PC-3 (cell line): ENCODE measurements at regions of chr12 and their contacts with region 1.

Region 1: DNA sequence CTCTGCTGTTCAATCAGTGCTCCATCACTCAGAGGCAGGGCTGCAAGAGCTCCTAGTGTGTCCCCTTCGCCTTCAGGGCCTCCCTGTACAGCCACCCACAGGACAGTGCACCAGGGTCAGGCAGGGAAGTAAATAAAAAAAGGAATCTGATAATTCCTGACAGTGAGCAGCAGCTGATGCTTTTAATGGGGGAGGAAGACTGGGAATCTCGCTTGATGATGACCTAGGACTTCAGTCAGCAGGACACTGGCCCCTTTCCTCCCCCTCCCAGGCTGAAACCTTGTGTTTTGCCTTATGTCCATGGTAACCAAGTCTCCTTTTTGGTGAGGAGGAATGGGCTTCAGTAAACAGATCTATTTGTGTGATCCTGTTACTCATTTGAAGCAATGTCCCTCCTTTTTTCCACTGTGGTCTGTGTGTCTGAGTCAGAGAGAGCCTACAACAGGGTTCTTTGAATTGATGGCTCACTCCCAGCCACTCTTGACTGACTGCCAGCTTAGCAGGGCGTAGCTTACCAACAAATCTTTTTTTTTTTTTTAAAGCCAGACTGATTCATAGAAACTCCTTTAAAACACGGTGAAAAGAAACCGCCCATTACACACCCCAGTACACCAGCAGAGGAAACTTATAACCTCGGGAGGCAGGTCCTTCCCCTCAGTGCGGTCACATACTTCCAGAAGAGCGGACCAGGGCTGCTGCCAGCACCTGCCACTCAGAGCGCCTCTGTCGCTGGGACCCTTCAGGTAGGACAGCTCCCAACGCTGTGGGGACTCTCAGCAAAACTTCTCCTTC is at the start of gene EMP1:
- DNase-seq: peak; percentile 98
- ATAC-seq: peak; percentile 72
- H3K4me3 ChIP-seq: peak within 1 kb of the TSS; percentile 100
- H3K27ac ChIP-seq: peak within 1 kb of the TSS; percentile 99
- H3K4me1 ChIP-seq: peaks cover 53% of the 10 kb centered on the region
- H3K27me3 ChIP-seq: no peaks in the 10 kb centered on the region
- CTCF ChIP-seq: no peak
- total RNA-seq, gene EMP1: 158 and 187 TPM in 2 replicates

Region 2: GRCh38 chr12:13044002-13044905 is 152.1 kb before region 1 on chr12 and contains the start of gene FAM234B:
- CTCF ChIA-PET with region 1: no interaction called
- POLR2A ChIA-PET with region 1: interaction called, 13 read pairs
- intact Hi-C with region 1: no loop called
- DNase-seq: peak; percentile 60
- ATAC-seq: peak; percentile 96
- H3K4me3 ChIP-seq: peak within 1 kb of the TSS; percentile 97
- H3K27ac ChIP-seq: no peak within 1 kb of the TSS
- H3K4me1 ChIP-seq: 0 out of 2 replicates have a peak, but pooled peaks cover 4% of the 10 kb centered on the region
- H3K27me3 ChIP-seq: no peaks in the 10 kb centered on the region
- CTCF ChIP-seq: peak; percentile 29; the same call in 1 of the 2 replicates
- total RNA-seq, gene FAM234B: 3.1 and 3.3 TPM in 2 replicates

Region 3: DNA sequence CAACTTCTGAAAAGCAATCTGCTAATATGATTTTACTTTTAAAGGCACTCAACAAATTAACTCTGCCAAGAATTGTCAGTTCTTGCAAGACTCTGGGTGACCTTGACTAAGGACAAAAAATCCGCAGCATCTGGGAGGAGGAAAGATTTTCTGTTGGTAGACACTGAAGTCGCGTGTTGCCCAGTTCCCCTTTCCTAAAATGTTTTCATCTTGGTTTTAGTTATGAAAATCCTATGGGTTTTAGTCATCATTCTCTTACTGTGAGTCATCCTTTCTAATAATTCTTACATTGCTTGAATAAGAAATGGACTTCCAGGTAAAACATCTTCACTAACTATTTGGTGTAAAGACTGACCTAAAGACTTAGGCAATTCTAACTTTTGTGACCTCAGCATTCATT is 102.0 kb before region 1 on chr12:
- CTCF ChIA-PET with region 1: interaction called, 4 read pairs
- POLR2A ChIA-PET with region 1: interaction called, 17 read pairs
- intact Hi-C with region 1: loop called (anchors 1 kb)
- DNase-seq: peak; percentile 71
- ATAC-seq: 0 out of 2 replicates have a peak, but pooled peaks have one; percentile 2
- H3K4me3 ChIP-seq: peak overlapping the region; percentile 13; the same call in 1 of the 2 replicates
- H3K27ac ChIP-seq: peak overlapping the region; percentile 63
- H3K4me1 ChIP-seq: peaks cover 56% of the 10 kb centered on the region
- H3K27me3 ChIP-seq: no peaks in the 10 kb centered on the region
- CTCF ChIP-seq: no peak

Region 4: GRCh38 chr12:13114251-13115052 is 81.9 kb before region 1 on chr12:
- CTCF ChIA-PET with region 1: no interaction called
- POLR2A ChIA-PET with region 1: interaction called, 11 read pairs
- intact Hi-C with region 1: no loop called
- DNase-seq: no peak
- ATAC-seq: no peak
- H3K4me3 ChIP-seq: no peak overlapping the region
- H3K27ac ChIP-seq: no peak overlapping the region
- H3K4me1 ChIP-seq: 0 out of 2 replicates have a peak, but pooled peaks cover 3% of the 10 kb centered on the region
- H3K27me3 ChIP-seq: no peaks in the 10 kb centered on the region
- CTCF ChIP-seq: no peak

Region 5: GRCh38 chr12:13124661-13125505 is 71.4 kb before region 1 on chr12:
- CTCF ChIA-PET with region 1: no interaction called
- POLR2A ChIA-PET with region 1: no interaction called
- intact Hi-C with region 1: no loop called
- DNase-seq: peak; percentile 50
- ATAC-seq: no peak
- H3K4me3 ChIP-seq: no peak overlapping the region
- H3K27ac ChIP-seq: no peak overlapping the region
- H3K4me1 ChIP-seq: peaks cover 39% of the 10 kb centered on the region
- H3K27me3 ChIP-seq: no peaks in the 10 kb centered on the region
- CTCF ChIP-seq: no peak

Region 6: GRCh38 chr12:13165617-13166041 is 30.7 kb before region 1 on chr12:
- CTCF ChIA-PET with region 1: no interaction called
- POLR2A ChIA-PET with region 1: interaction called, 17 read pairs
- intact Hi-C with region 1: no loop called
- DNase-seq: peak; percentile 91
- ATAC-seq: peak; percentile 76
- H3K4me3 ChIP-seq: no peak overlapping the region
- H3K27ac ChIP-seq: peak overlapping the region; percentile 91
- H3K4me1 ChIP-seq: peaks cover 32% of the 10 kb centered on the region
- H3K27me3 ChIP-seq: no peaks in the 10 kb centered on the region
- CTCF ChIP-seq: no peak

Region 7: GRCh38 chr12:13179211-13180074 is 16.9 kb before region 1 on chr12:
- CTCF ChIA-PET with region 1: interaction called, 4 read pairs
- POLR2A ChIA-PET with region 1: interaction called, 34 read pairs
- intact Hi-C with region 1: loop called (anchors 2 kb)
- DNase-seq: peak; percentile 74
- ATAC-seq: peak; percentile 90
- H3K4me3 ChIP-seq: peak overlapping the region; percentile 60
- H3K27ac ChIP-seq: peak overlapping the region; percentile 86
- H3K4me1 ChIP-seq: peaks cover 56% of the 10 kb centered on the region
- H3K27me3 ChIP-seq: no peaks in the 10 kb centered on the region
- CTCF ChIP-seq: no peak

Region 8: GRCh38 chr12:14443531-14443930 is 1247.2 kb after region 1 on chr12:
- CTCF ChIA-PET with region 1: no interaction called
- POLR2A ChIA-PET with region 1: no interaction called
- intact Hi-C with region 1: no loop called
- DNase-seq: no peak
- ATAC-seq: no peak
- H3K4me3 ChIP-seq: no peak overlapping the region
- H3K27ac ChIP-seq: no peak overlapping the region
- H3K4me1 ChIP-seq: no peaks in the 10 kb centered on the region
- H3K27me3 ChIP-seq: no peaks in the 10 kb centered on the region
- CTCF ChIP-seq: no peak